ENCODE measurements at regions of chr1 and their contacts with region 1.

Region 1: DNA sequence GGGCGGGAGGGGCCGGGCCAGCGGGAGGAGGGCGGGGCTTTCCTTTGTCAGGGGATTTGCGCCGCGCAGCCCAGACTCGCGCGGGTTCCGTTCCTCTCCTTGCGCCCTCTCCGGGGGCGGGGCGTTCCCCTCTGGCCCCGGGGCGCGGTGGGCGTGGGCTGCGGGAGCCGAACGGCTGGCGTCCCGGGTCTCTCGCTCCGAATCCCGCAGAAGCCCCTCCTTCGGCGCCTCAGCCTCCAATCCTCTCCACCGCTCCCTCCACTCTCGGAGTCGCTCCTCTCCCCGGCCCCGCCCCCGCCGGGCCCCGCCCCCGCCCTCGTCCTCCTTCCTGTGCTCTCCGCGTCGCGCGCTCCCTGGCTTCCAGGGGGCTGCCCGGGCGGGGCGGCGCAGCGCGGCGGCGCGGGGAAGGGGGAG is 82.8 kb upstream of the BMP8A start:
- DNase-seq: peak; percentile 94 to 95
- H3K4me3 ChIP-seq: peak overlapping the region; percentile 78
- H3K4me3 Mint-ChIP-seq: peak overlapping the region; percentile 82
- H3K27ac Mint-ChIP-seq: peak overlapping the region; percentile 84
- H3K4me1 ChIP-seq: peaks cover 23% of the 10 kb centered on the region
- H3K4me1 Mint-ChIP-seq: peaks cover 22% of the 10 kb centered on the region
- H3K27me3 ChIP-seq: no peaks in the 10 kb centered on the region
- H3K27me3 Mint-ChIP-seq: no peaks in the 10 kb centered on the region
- CTCF ChIP-seq: no peak

Region 2: DNA sequence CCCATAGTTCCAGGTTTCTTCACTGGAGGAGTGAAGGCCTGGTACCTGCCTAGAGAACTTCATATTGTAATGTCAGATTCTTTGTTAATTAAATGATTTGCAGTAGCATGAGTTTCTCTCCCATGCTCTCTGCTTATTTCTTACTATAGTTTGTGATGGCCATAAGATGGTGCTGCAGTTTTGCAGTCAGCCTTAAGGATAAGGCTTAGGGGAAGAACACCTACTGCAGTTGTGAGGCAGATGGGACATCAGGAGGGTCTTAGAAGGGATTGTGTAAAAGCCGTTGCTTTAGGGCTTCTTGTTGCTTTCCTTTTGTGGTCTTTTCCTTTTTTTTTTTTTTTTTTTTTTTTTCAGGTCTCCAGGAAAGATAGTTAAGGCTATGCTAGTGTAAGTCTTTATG is 142.4 kb before region 1 on chr1:
- CTCF ChIA-PET with region 1: interaction called, 3 read pairs
- POLR2A ChIA-PET with region 1: no interaction called
- intact Hi-C with region 1: loop called (anchors 1 kb)
- DNase-seq: peak in 1 of 2 experiments; percentile 12
- H3K4me3 ChIP-seq: no peak overlapping the region
- H3K4me3 Mint-ChIP-seq: no peak overlapping the region
- H3K27ac Mint-ChIP-seq: no peak overlapping the region
- H3K4me1 ChIP-seq: peaks cover 35% of the 10 kb centered on the region
- H3K4me1 Mint-ChIP-seq: peaks cover 33% of the 10 kb centered on the region
- H3K27me3 ChIP-seq: no peaks in the 10 kb centered on the region
- H3K27me3 Mint-ChIP-seq: no peaks in the 10 kb centered on the region
- CTCF ChIP-seq: peak in 1 of 2 experiments; percentile 9

Region 3: GRCh38 chr1:39387452-39387851 is 21.2 kb before region 1 on chr1:
- CTCF ChIA-PET with region 1: interaction called, 12 read pairs
- POLR2A ChIA-PET with region 1: interaction called, 3 read pairs
- intact Hi-C with region 1: no loop called
- DNase-seq: peak; percentile 71 to 72
- H3K4me3 ChIP-seq: no peak overlapping the region
- H3K4me3 Mint-ChIP-seq: no peak overlapping the region
- H3K27ac Mint-ChIP-seq: peak overlapping the region; percentile 71
- H3K4me1 ChIP-seq: peaks cover 21% of the 10 kb centered on the region
- H3K4me1 Mint-ChIP-seq: peaks cover 24% of the 10 kb centered on the region
- H3K27me3 ChIP-seq: no peaks in the 10 kb centered on the region
- H3K27me3 Mint-ChIP-seq: no peaks in the 10 kb centered on the region
- CTCF ChIP-seq: peak; percentile 43 to 44

Region 4: DNA sequence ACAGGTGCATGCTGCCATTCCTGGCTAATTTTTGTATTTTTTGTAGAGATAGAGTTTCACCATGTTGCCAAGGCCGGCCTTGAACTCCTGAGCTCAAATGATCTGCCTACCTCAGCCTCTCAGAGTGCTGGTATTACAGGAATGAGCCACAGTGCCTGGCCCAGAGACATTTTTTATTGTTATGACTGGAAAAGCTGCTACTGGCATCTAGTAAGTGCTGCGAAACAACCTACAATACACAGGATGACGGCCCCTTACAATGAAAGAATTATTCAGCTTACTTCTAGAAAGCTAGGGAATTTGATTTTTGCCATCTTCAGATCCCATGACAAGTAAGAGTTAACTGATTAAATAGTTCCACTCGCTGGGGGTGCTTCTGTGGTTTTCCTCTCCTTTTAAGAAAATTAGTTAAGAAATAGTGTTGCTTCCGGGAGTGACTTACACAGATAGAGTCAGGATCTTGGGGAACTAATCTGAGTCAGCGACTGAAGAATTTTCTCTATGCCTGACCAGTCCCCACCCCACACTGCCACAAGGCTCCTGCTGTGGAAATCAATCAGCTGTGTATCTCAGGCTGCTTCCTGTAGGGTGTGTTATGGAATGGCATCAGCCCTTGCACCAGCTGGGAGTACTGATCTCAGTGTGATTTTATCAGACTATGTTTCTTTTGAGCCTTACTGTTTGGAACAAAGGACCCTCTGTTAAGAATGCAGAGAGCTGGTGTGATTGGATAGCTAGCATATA is 10.2 kb before region 1 on chr1:
- CTCF ChIA-PET with region 1: interaction called, 6 read pairs
- POLR2A ChIA-PET with region 1: interaction called, 3 read pairs
- intact Hi-C with region 1: loop called (anchors 1 kb)
- DNase-seq: peak; percentile 54 to 69
- H3K4me3 ChIP-seq: no peak overlapping the region
- H3K4me3 Mint-ChIP-seq: no peak overlapping the region
- H3K27ac Mint-ChIP-seq: peak overlapping the region; percentile 48
- H3K4me1 ChIP-seq: peaks cover 32% of the 10 kb centered on the region
- H3K4me1 Mint-ChIP-seq: peaks cover 11% of the 10 kb centered on the region
- H3K27me3 ChIP-seq: no peaks in the 10 kb centered on the region
- H3K27me3 Mint-ChIP-seq: no peaks in the 10 kb centered on the region
- CTCF ChIP-seq: no peak

Measured in Caco-2 (cell line).